ENCODE measurements at regions of chr5 and their contacts with region 1.

Region 1: DNA sequence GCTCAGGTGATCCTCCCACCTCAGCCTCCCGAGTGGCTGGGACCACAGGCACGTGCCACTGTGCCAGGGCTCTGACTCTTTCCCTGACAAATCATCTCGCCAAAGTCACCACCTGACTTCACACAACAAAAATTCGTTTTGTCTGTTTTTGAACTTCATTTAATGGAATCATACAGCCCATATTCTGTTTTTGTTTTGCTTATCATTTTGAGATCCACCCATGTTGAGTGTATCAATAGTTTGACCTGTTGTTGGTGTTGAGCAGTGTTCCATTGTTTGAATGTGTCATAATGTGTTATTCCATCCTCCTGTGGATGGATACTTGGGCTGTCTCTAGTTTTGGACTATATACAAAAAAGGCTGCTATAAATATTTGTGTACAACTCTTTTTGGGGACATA is 6.9 kb upstream of the UBE2D2 start:
- DNase-seq: peak in 1 of 2 donors; percentile 57
- H3K4me3 ChIP-seq: no peak overlapping the region
- CTCF ChIP-seq: no peak
- POLR2A ChIP-seq: no peak

Region 2: DNA sequence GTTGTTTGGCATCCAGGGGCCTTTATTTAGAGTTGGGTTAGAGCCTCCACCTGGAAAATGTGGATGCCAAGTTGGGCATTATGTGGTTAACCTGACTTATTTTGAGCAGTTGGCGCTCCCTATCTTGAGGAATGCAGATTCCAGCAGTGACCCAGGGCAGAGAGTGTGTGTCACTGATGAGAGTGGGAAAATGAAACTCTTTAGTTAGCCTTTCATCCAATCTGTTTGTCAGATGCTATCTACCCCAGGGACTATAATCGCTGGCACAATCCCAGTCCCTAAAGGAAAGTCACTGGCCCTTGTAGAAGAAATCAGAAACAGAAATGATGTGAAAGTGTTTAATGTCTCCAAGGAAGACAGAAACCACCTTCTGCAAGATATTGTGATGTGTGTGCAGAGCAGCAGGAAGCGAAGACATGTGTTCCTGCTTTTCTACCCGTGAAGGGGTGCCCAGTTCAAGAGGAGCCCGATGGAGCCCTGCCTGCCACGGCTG is 61.5 kb before region 1 on chr5:
- intact Hi-C with region 1: no loop called
- DNase-seq: no peak
- H3K4me3 ChIP-seq: no peak overlapping the region
- CTCF ChIP-seq: no peak
- POLR2A ChIP-seq: no peak

Region 3: DNA sequence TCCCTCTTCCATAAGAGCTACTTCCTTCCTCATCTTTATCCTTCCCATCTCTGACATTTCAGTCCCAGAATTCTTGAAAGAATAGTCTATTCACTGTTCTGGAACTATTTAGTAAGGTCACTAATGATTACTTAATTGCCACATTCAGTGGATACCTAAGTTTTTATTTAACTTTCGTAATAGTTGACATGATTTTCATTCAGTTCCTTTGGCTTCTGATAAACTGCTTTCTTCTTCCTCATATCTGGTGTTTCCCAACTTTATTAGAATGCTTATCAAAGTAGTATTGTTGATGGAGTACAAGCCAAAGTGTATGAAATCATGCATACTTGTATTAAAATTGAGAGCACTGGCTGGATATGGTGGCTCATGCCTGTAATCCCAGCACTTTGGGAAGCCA is 17.7 kb after region 1 on chr5:
- intact Hi-C with region 1: loop called (anchors 1 kb)
- DNase-seq: no peak
- H3K4me3 ChIP-seq: no peak overlapping the region
- CTCF ChIP-seq: no peak
- POLR2A ChIP-seq: no peak

Region 4: GRCh38 chr5:139619861-139620260 is 65.6 kb after region 1 on chr5:
- intact Hi-C with region 1: no loop called
- DNase-seq: peak in 1 of 2 donors; percentile 56
- H3K4me3 ChIP-seq: no peak overlapping the region
- CTCF ChIP-seq: no peak
- POLR2A ChIP-seq: no peak

Region 5: GRCh38 chr5:139745800-139746690 is 191.8 kb after region 1 on chr5:
- intact Hi-C with region 1: no loop called
- DNase-seq: peak; percentile 62 to 93
- H3K4me3 ChIP-seq: no peak overlapping the region
- CTCF ChIP-seq: no peak
- POLR2A ChIP-seq: no peak